Heart left ventricle (tissue), 16 donors: ENCODE measurements at regions of chrX and their contacts with region 1.

Region 1: DNA sequence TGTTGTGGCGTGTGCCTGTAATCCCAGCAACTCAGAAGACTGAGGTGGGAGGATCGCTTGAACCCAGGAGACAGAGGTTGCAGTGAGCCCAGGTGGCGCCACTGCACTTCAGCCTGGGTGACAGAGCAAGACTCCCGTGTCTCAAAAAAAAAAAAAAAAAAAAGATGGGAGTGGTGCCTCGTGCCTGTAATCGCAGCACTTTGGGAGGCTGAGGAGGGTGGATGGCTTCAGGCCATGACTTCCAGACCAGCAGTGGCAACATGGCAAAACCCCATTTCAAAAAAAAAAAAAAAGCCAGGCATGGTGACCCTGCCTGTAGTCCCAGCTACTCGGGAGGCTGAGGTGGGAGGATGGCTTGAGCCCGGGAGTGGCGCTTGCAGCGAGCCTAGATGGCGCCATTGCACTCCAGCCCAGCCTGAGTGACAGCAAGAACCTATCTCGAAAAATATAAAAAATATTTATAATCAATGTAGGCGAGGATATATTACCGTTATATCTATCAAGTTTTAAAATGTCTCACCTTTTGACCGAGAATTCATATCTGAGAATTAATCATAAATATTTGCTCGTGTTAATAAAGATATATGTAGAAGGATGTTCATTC is 27.0 kb downstream of the EIF2S3 start:
- DNase-seq: peak; percentile 32 to 69 (median 49)
- ATAC-seq: peak; percentile 20 to 79 (median 64)
- H3K4me3 ChIP-seq: no peak overlapping the region
- H3K27ac ChIP-seq: no peak overlapping the region
- H3K4me1 ChIP-seq: no peaks in the 10 kb centered on the region
- H3K27me3 ChIP-seq: peaks cover 0 to 8% (median 0%) of the 10 kb centered on the region in 9 donors
- CTCF ChIP-seq: peak in 11 of 12 donors; percentile 22 to 56 (median 43)
- POLR2A ChIP-seq: no peak

Region 2: DNA sequence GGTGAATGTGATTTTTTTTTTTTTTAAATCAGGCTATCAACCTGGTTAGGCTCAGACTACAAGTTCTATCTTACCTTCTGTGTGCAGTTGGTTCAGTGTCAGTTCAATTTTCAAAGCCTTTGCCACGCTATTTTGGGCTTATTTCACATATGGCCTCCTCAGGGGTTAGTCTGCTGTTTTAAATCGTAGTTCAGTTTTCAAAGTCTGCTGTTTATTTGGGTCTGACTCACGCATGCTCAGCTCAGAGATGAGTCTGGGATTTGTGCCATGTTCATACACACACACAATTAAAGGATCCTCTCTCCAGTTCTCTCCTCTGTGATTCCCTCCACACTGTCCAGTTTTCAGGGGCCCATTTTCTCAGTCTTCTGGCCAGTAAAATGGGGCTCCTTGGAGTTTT is 35.5 kb after region 1 on chrX:
- intact Hi-C with region 1: no loop called
- DNase-seq: peak in 2 of 5 donors; percentile 10 to 22
- ATAC-seq: peak in 3 of 4 donors; percentile 69 to 73 (median 73)
- H3K4me3 ChIP-seq: peak overlapping the region in 4 of 12 donors; percentile 6 to 38 (median 16)
- H3K27ac ChIP-seq: peak overlapping the region in 6 of 12 donors; percentile 4 to 55 (median 30)
- H3K4me1 ChIP-seq: peaks cover 0 to 4% (median 0%) of the 10 kb centered on the region in 12 donors
- H3K27me3 ChIP-seq: peaks cover 0 to 2% (median 0%) of the 10 kb centered on the region in 9 donors
- CTCF ChIP-seq: no peak
- POLR2A ChIP-seq: no peak

Region 3: GRCh38 chrX:24231131-24231540 is 149.4 kb after region 1 on chrX:
- intact Hi-C with region 1: loop called in 1 of 10 experiments (anchors 10 kb)
- DNase-seq: peak in 2 of 5 donors; percentile 15 to 17
- ATAC-seq: peak in 3 of 4 donors; percentile 51 to 83 (median 63)
- H3K4me3 ChIP-seq: no peak overlapping the region
- H3K27ac ChIP-seq: peak overlapping the region in 1 of 12 donors; percentile 30
- H3K4me1 ChIP-seq: peaks cover 0 to 4% (median 0%) of the 10 kb centered on the region in 12 donors
- H3K27me3 ChIP-seq: peaks cover 0 to 4% (median 0%) of the 10 kb centered on the region in 9 donors
- CTCF ChIP-seq: no peak
- POLR2A ChIP-seq: no peak

Region 4: DNA sequence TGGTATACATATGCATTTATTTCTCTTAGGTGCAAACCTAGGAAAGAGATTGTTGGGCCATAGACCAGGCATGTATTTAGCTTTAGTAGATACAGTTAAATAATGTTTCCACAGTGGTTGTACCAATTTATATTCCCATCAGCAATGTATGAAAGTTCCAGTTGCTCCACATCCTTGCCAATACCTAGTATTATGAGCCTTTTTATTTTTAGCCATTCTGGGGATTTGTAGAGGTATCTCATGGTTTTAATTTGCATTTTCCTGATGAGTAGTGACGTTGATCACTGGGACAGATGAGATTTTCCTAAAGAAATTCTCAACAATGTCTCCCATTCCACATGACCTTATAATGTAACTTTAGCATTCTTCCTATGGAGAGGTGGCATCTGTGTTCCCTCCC is 175.2 kb after region 1 on chrX:
- intact Hi-C with region 1: no loop called
- DNase-seq: no peak
- ATAC-seq: no peak
- H3K4me3 ChIP-seq: no peak overlapping the region
- H3K27ac ChIP-seq: no peak overlapping the region
- H3K4me1 ChIP-seq: peaks cover 0 to 11% (median 0%) of the 10 kb centered on the region in 12 donors
- H3K27me3 ChIP-seq: peaks cover 0 to 52% (median 0%) of the 10 kb centered on the region in 9 donors
- CTCF ChIP-seq: no peak
- POLR2A ChIP-seq: no peak